Heart right ventricle (tissue), 16 donors: ENCODE measurements at regions of chr2 and their contacts with region 1.

Region 1: DNA sequence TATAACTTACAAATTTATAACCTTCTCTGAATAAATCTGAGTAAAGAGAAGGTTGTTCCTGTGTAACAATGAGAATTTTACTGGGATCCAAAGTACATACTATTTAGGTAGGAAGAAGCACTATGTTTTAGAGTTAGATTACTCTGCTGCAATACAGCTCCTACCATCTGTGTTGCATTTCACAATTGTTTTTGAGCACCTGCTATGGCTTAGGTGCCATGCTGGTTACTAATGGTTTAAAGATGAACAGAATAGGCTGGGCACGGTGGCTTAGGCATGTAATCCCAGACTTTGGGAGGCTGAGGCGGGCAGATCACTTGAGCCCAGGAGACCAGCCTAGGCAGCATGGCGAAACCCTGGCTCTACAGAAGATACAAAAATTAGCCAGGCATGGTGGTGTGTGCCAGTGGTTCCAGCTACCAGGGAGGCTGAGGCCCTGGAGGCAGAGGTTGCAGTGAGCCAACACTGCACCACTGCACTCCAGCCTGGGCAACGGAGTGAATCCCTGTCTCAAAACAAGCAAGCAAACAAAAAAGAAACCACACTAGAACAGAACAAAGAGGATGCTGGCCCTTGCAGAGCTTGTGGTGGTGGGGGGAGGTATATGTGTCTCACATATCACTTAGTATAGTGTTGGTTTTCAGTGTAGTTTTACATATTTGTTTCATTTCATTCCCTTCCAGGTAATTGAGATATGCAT is 56.7 kb downstream of the SPTBN1 start:
- DNase-seq: no peak
- ATAC-seq: peak in 2 of 8 donors; percentile 10 to 24
- H3K4me3 ChIP-seq: no peak overlapping the region
- H3K27ac ChIP-seq: peak overlapping the region in 2 of 10 donors; percentile 8 to 57
- H3K4me1 ChIP-seq: peaks cover 22 to 100% (median 87%) of the 10 kb centered on the region in 9 donors
- H3K27me3 ChIP-seq: no peaks in the 10 kb centered on the region
- CTCF ChIP-seq: no peak

Region 2: GRCh38 chr2:54579684-54580620 is 67.1 kb after region 1 on chr2:
- intact Hi-C with region 1: no loop called
- DNase-seq: no peak
- ATAC-seq: no peak
- H3K4me3 ChIP-seq: no peak overlapping the region
- H3K27ac ChIP-seq: peak overlapping the region in 8 of 10 donors; percentile 5 to 69 (median 49)
- H3K4me1 ChIP-seq: peaks cover 51 to 100% (median 94%) of the 10 kb centered on the region in 9 donors
- H3K27me3 ChIP-seq: no peaks in the 10 kb centered on the region
- CTCF ChIP-seq: no peak

Region 3: GRCh38 chr2:54845514-54845913 is 332.7 kb after region 1 on chr2:
- intact Hi-C with region 1: loop called in 1 of 10 experiments (anchors 10 kb)
- DNase-seq: no peak
- ATAC-seq: no peak
- H3K4me3 ChIP-seq: no peak overlapping the region
- H3K27ac ChIP-seq: no peak overlapping the region
- H3K4me1 ChIP-seq: no peaks in the 10 kb centered on the region
- H3K27me3 ChIP-seq: no peaks in the 10 kb centered on the region
- CTCF ChIP-seq: no peak